T-cell (primary cell): ENCODE measurements at regions of chr7 and their contacts with region 1.

Region 1: GRCh38 chr7:35906191-35906908 is 105.5 kb downstream of the SEPTIN7 start:
- DNase-seq: peak; percentile 14 to 88 (median 60)
- ATAC-seq: peak; percentile 82 to 92 (median 86)
- H3K4me3 ChIP-seq: no peak overlapping the region
- H3K4me3 Mint-ChIP-seq: no peak overlapping the region
- H3K27ac ChIP-seq: peak overlapping the region; percentile 47
- H3K27ac Mint-ChIP-seq: peak overlapping the region; percentile 50 to 72
- H3K4me1 ChIP-seq: peaks cover 0 to 2% of the 10 kb centered on the region in 2 experiments
- H3K4me1 Mint-ChIP-seq: peaks cover 0 to 11% (median 11%) of the 10 kb centered on the region in 3 donors
- H3K27me3 ChIP-seq: no peaks in the 10 kb centered on the region
- H3K27me3 Mint-ChIP-seq: no peaks in the 10 kb centered on the region

Region 2: GRCh38 chr7:35424869-35425495 is 481.4 kb before region 1 on chr7:
- CTCF ChIA-PET with region 1: interaction called, 4 to 10 read pairs
- POLR2A ChIA-PET with region 1: no interaction called
- DNase-seq: peak; percentile 4 to 72 (median 45)
- ATAC-seq: peak; percentile 44 to 65 (median 59)
- H3K4me3 ChIP-seq: no peak overlapping the region
- H3K4me3 Mint-ChIP-seq: no peak overlapping the region
- H3K27ac ChIP-seq: no peak overlapping the region
- H3K27ac Mint-ChIP-seq: no peak overlapping the region
- H3K4me1 ChIP-seq: no peaks in the 10 kb centered on the region
- H3K4me1 Mint-ChIP-seq: peaks cover 0 to 10% (median 0%) of the 10 kb centered on the region in 3 donors
- H3K27me3 ChIP-seq: no peaks in the 10 kb centered on the region
- H3K27me3 Mint-ChIP-seq: peaks cover 17 to 28% of the 10 kb centered on the region in 2 donors

Region 3: DNA sequence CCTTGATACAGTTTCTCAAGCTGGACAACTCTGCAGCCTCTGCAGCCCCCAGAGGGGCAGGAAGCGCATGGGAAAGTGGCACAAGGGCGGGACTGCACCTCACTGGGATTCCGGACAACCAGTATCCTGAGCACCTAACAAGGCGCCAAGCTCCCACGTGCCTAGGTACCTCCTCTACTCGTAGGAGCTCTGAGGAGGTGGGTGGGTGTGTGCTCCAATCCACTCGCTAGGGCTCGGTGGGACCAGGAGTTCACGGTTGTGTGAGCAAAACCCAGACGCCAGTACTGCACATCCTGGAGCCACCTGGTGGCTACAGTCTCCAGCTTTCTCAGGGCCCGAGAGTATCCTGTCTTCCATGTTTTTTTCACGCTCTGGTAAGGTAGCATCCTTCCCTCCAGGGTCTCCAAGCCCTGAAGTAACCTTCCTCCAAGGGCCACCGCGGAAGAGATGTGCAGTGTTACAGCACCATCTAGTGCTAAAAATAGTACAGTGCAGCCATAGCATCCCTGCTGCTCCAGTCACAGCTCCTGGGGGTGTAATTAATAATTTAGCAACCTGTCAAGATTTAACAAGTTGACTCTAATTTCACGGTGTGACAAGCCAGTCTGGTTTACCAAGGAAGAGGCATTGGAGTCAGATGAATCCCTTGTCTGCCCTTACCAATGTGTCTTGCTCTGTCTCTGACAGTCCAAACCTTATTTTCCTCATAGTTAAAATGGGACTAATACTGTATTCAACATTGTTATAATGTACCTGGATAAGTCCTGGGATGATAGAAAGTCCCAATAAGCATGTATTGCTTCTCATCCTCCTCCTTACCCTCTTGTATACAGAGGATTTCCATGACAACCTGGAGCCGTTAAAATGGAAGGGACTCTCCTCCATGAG is 281.8 kb before region 1 on chr7:
- CTCF ChIA-PET with region 1: interaction called, 4 to 11 read pairs
- POLR2A ChIA-PET with region 1: interaction called in 1 of 2 experiments, 3 read pairs
- DNase-seq: peak in 25 of 35 experiments; percentile 6 to 70 (median 18)
- ATAC-seq: peak; percentile 80 to 81 (median 81)
- H3K4me3 ChIP-seq: no peak overlapping the region
- H3K4me3 Mint-ChIP-seq: no peak overlapping the region
- H3K27ac ChIP-seq: no peak overlapping the region
- H3K27ac Mint-ChIP-seq: no peak overlapping the region
- H3K4me1 ChIP-seq: peaks cover 0 to 6% of the 10 kb centered on the region in 2 experiments
- H3K4me1 Mint-ChIP-seq: peaks cover 3 to 6% (median 3%) of the 10 kb centered on the region in 3 donors
- H3K27me3 ChIP-seq: no peaks in the 10 kb centered on the region
- H3K27me3 Mint-ChIP-seq: no peaks in the 10 kb centered on the region

Region 4: GRCh38 chr7:35714862-35715261 is 191.5 kb before region 1 on chr7:
- CTCF ChIA-PET with region 1: interaction called, 5 to 10 read pairs
- POLR2A ChIA-PET with region 1: interaction called, 4 to 5 read pairs
- DNase-seq: no peak
- ATAC-seq: no peak
- H3K4me3 ChIP-seq: no peak overlapping the region
- H3K4me3 Mint-ChIP-seq: no peak overlapping the region
- H3K27ac ChIP-seq: no peak overlapping the region
- H3K27ac Mint-ChIP-seq: no peak overlapping the region
- H3K4me1 ChIP-seq: peaks cover 4 to 8% of the 10 kb centered on the region in 2 experiments
- H3K4me1 Mint-ChIP-seq: peaks cover 5 to 15% (median 6%) of the 10 kb centered on the region in 3 donors
- H3K27me3 ChIP-seq: no peaks in the 10 kb centered on the region
- H3K27me3 Mint-ChIP-seq: no peaks in the 10 kb centered on the region

Region 5: DNA sequence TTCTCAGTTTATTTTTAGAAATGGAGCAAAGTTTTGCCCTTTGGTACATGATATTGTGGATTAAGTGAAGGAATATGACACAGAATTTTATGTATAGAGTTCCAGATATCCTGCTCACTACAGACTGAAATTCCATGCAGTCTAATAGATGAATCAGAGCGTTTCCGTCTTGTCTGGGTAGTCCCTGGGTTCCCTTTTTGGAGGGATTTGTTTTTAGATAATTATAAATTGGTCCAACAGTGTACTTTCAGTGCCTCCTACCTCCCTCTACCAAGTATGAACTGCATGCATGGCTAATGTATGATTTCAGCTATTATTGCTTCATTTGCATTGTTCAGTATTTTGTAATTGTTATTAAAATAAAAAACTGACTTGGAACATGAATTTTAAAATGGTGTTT is 31.1 kb before region 1 on chr7:
- CTCF ChIA-PET with region 1: no interaction called
- POLR2A ChIA-PET with region 1: no interaction called
- DNase-seq: no peak
- ATAC-seq: no peak
- H3K4me3 ChIP-seq: no peak overlapping the region
- H3K4me3 Mint-ChIP-seq: no peak overlapping the region
- H3K27ac ChIP-seq: no peak overlapping the region
- H3K27ac Mint-ChIP-seq: no peak overlapping the region
- H3K4me1 ChIP-seq: no peaks in the 10 kb centered on the region
- H3K4me1 Mint-ChIP-seq: peaks cover 23 to 27% (median 26%) of the 10 kb centered on the region in 3 donors
- H3K27me3 ChIP-seq: no peaks in the 10 kb centered on the region
- H3K27me3 Mint-ChIP-seq: no peaks in the 10 kb centered on the region